HEK293T (cell line): ENCODE measurements at regions of chr14 and their contacts with region 1.

Region 1: GRCh38 chr14:103828315-103828967 is 18.9 kb downstream of the PPP1R13B start:
- DNase-seq: no peak

Region 2: GRCh38 chr14:103920981-103921854 is 92.8 kb after region 1 on chr14:
- CTCF ChIA-PET with region 1: interaction called, 10 read pairs
- POLR2A ChIA-PET with region 1: no interaction called
- DNase-seq: peak; percentile 97